Endothelial cell of umbilical vein (primary cell): ENCODE measurements at regions of chr1 and their contacts with region 1.

Region 1: GRCh38 chr1:29062157-29062942 is 61.4 kb downstream of the TMEM200B start:
- DNase-seq: no peak
- H3K4me3 ChIP-seq: no peak overlapping the region
- H3K27ac ChIP-seq: no peak overlapping the region
- H3K4me1 ChIP-seq: no peaks in the 10 kb centered on the region
- H3K27me3 ChIP-seq: no peaks in the 10 kb centered on the region
- CTCF ChIP-seq: no peak
- POLR2A ChIP-seq: no peak

Region 2: DNA sequence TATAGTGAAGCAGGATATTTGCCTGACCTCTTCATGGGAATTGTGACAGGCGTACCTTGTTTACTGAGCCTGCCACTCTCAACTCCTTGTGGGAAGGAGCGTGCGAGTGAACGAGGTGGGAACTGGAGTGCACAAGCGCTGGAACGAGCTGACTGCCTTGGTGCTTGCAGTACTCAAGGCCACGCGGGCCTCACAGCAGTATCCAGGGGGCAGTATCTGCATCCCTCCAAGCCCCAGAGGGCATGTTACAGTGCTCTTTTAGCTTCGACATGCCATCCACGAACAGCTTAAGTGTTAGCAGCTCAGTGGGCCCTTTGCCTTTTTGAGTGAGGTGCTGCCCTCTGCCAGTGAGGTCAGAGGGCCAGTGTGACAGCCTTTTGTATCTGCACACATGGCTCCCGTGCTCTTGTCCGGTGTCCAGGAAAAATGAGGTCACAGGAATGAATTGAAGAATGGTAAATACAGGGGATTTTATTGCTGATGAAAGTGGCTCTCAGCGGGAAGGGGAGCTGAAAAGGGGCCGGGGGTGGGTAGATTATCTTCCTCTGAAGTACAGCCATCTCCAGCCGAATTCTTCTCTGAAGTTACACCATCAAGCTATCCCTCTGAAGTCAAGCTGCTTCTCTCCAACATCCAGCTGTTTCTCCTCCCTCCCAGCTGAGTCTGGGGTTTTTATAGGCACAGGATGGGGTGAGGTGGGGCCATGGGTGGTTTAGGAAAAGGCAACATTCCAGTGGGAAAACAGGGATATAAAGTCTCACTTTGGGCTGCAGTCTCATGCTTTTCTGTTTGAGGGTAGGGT is 78.6 kb before region 1 on chr1:
- CTCF ChIA-PET with region 1: no interaction called
- POLR2A ChIA-PET with region 1: no interaction called
- dilution Hi-C with region 1: no loop called
- intact Hi-C with region 1: no loop called
- DNase-seq: no peak
- H3K4me3 ChIP-seq: no peak overlapping the region
- H3K27ac ChIP-seq: no peak overlapping the region
- H3K4me1 ChIP-seq: peaks cover 2% of the 10 kb centered on the region
- H3K27me3 ChIP-seq: no peaks in the 10 kb centered on the region
- CTCF ChIP-seq: no peak
- POLR2A ChIP-seq: no peak

Region 3: DNA sequence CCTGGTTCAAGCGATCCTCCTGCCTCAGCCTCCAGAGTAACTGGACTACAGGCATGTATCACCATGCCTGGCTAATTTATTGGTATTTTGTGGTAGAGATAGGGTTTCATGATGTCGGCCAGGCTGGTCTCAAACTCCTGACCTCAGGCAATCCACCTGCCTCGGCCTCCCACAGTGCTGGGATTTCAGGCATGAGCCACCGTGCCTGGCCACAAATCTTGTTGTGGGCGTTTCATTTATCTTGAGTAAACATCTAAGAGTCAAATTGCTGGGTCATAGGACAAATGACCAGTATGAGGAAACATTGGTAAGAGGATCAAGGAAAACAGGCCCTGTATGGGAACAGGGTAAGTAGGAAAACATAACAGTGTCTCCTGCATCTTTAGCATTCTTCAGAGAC is 43.5 kb after region 1 on chr1:
- CTCF ChIA-PET with region 1: no interaction called
- POLR2A ChIA-PET with region 1: no interaction called
- dilution Hi-C with region 1: no loop called
- intact Hi-C with region 1: no loop called
- DNase-seq: no peak
- H3K4me3 ChIP-seq: no peak overlapping the region
- H3K27ac ChIP-seq: no peak overlapping the region
- H3K4me1 ChIP-seq: no peaks in the 10 kb centered on the region
- H3K27me3 ChIP-seq: no peaks in the 10 kb centered on the region
- CTCF ChIP-seq: no peak
- POLR2A ChIP-seq: no peak

Region 4: GRCh38 chr1:29297450-29297849 is 235.1 kb after region 1 on chr1:
- CTCF ChIA-PET with region 1: no interaction called
- POLR2A ChIA-PET with region 1: no interaction called
- dilution Hi-C with region 1: no loop called
- intact Hi-C with region 1: loop called (anchors 5 kb)
- DNase-seq: no peak
- H3K4me3 ChIP-seq: no peak overlapping the region
- H3K27ac ChIP-seq: no peak overlapping the region
- H3K4me1 ChIP-seq: no peaks in the 10 kb centered on the region
- H3K27me3 ChIP-seq: no peaks in the 10 kb centered on the region
- CTCF ChIP-seq: no peak
- POLR2A ChIP-seq: no peak